ENCODE measurements at regions of chr12 and their contacts with region 1.

Region 1: DNA sequence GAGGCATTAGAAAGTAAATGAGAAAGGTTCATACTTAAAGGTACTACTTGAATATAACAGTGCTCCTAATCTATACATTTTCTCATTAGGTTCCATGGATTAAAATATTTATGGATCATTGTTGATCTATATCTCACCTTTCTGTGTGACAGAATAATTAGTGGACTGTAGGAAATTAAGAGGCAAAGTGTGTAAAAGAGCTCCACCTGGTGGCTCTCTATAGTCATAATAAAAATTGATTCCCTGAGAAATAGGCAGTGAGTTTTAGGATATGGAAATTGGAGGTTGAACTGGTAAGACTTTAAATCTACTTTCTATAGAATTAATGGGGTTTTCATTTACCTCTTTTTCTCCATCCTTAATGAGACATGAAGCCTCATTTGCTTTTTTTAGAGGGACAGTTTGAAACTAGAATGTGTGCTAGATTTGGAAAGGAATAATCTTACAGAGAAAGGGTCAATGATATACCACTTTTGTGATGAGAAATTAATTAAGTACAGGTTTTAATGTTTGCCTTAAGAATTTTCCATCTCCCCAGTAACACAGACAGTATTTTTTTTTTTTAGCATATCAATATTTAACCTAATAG is 11.8 kb upstream of the DERA start:
- DNase-seq: peak in 1 of 35 experiments; percentile 62
- ATAC-seq: peak in 1 of 4 experiments; percentile 60
- H3K4me3 ChIP-seq: no peak overlapping the region
- H3K4me3 Mint-ChIP-seq: no peak overlapping the region
- H3K27ac ChIP-seq: no peak overlapping the region
- H3K27ac Mint-ChIP-seq: peak overlapping the region in 1 of 2 donors; percentile 70
- H3K4me1 ChIP-seq: no peaks in the 10 kb centered on the region
- H3K4me1 Mint-ChIP-seq: peaks cover 0 to 10% (median 8%) of the 10 kb centered on the region in 3 donors
- H3K27me3 ChIP-seq: no peaks in the 10 kb centered on the region
- H3K27me3 Mint-ChIP-seq: no peaks in the 10 kb centered on the region

Region 2: GRCh38 chr12:15540469-15540872 is 358.9 kb before region 1 on chr12:
- CTCF ChIA-PET with region 1: no interaction called
- POLR2A ChIA-PET with region 1: interaction called in 1 of 2 experiments, 11 read pairs
- DNase-seq: no peak
- ATAC-seq: no peak
- H3K4me3 ChIP-seq: no peak overlapping the region
- H3K4me3 Mint-ChIP-seq: no peak overlapping the region
- H3K27ac ChIP-seq: no peak overlapping the region
- H3K27ac Mint-ChIP-seq: peak overlapping the region; percentile 3 to 9
- H3K4me1 ChIP-seq: peaks cover 11 to 13% of the 10 kb centered on the region in 2 experiments
- H3K4me1 Mint-ChIP-seq: peaks cover 43 to 45% (median 45%) of the 10 kb centered on the region in 3 donors
- H3K27me3 ChIP-seq: no peaks in the 10 kb centered on the region
- H3K27me3 Mint-ChIP-seq: no peaks in the 10 kb centered on the region

Region 3: GRCh38 chr12:15830538-15830937 is 68.8 kb before region 1 on chr12:
- CTCF ChIA-PET with region 1: no interaction called
- POLR2A ChIA-PET with region 1: no interaction called
- DNase-seq: no peak
- ATAC-seq: no peak
- H3K4me3 ChIP-seq: no peak overlapping the region
- H3K4me3 Mint-ChIP-seq: no peak overlapping the region
- H3K27ac ChIP-seq: no peak overlapping the region
- H3K27ac Mint-ChIP-seq: no peak overlapping the region
- H3K4me1 ChIP-seq: no peaks in the 10 kb centered on the region
- H3K4me1 Mint-ChIP-seq: no peaks in the 10 kb centered on the region
- H3K27me3 ChIP-seq: no peaks in the 10 kb centered on the region
- H3K27me3 Mint-ChIP-seq: peaks cover 0 to 4% of the 10 kb centered on the region in 2 donors

Region 4: GRCh38 chr12:15910864-15911721 is 11.7 kb after region 1 on chr12 and contains the start of gene DERA:
- CTCF ChIA-PET with region 1: interaction called, 4 to 49 read pairs
- POLR2A ChIA-PET with region 1: interaction called in 1 of 2 experiments, 12 read pairs
- DNase-seq: peak; percentile 6 to 67 (median 37)
- ATAC-seq: peak; percentile 88 to 97 (median 94)
- H3K4me3 ChIP-seq: peak within 1 kb of the TSS; percentile 81 to 87
- H3K4me3 Mint-ChIP-seq: peak within 1 kb of the TSS; percentile 91 to 94 (median 92)
- H3K27ac ChIP-seq: peak within 1 kb of the TSS; percentile 73
- H3K27ac Mint-ChIP-seq: peak within 1 kb of the TSS; percentile 90 to 91
- H3K4me1 ChIP-seq: peaks cover 0 to 4% of the 10 kb centered on the region in 2 experiments
- H3K4me1 Mint-ChIP-seq: peaks cover 20 to 28% (median 21%) of the 10 kb centered on the region in 3 donors
- H3K27me3 ChIP-seq: no peaks in the 10 kb centered on the region
- H3K27me3 Mint-ChIP-seq: no peaks in the 10 kb centered on the region
- total RNA-seq, gene DERA: 11.0 to 13.4 (median 11.6) TPM